HCT116 (cell line): ENCODE measurements at regions of chr16 and their contacts with region 1.

Region 1: DNA sequence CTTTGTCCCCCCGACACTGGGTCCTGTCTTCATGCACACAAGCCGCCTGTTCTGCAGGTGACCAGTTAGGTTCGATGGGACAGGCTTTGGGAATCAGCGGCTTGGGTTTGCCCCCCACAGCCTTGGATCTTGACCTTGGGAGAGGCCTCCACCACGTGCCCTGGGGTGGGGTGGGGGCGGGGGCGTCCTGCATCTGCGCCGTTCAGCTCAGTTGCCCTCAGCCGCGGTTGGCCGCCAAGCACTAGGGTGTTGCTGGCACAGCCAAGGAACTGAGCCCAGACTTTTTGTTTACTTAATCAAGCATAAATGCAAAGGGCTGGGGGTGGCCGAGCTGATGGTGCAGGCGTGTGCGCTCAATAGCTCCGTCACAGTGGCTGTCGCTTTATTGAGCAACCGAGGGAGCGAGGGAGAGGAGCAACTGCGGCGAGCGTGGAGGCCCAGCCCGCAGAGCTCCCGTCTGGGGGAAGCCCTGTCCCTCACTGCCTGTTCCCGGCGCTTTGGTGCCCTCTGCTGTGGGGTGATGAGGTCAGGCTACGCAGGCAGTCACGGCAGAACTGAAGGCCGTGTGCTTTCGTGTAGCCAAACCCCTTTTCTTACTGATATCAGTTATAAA is 33.9 kb downstream of the JPH3 start:
- DNase-seq: peak; percentile 76
- ATAC-seq: peak; percentile 90
- H3K4me3 ChIP-seq: peak overlapping the region; percentile 44 to 56
- H3K27ac ChIP-seq: peak overlapping the region; percentile 16; the same call in 1 of the 2 replicates
- H3K4me1 ChIP-seq: peaks cover 10 to 18% of the 10 kb centered on the region in 2 experiments
- H3K27me3 ChIP-seq: peaks cover 19% of the 10 kb centered on the region
- CTCF ChIP-seq: peak; percentile 73 to 94 (median 83)
- POLR2A ChIP-seq: no peak
- RAD21 ChIP-seq: peak; percentile 97

Region 2: DNA sequence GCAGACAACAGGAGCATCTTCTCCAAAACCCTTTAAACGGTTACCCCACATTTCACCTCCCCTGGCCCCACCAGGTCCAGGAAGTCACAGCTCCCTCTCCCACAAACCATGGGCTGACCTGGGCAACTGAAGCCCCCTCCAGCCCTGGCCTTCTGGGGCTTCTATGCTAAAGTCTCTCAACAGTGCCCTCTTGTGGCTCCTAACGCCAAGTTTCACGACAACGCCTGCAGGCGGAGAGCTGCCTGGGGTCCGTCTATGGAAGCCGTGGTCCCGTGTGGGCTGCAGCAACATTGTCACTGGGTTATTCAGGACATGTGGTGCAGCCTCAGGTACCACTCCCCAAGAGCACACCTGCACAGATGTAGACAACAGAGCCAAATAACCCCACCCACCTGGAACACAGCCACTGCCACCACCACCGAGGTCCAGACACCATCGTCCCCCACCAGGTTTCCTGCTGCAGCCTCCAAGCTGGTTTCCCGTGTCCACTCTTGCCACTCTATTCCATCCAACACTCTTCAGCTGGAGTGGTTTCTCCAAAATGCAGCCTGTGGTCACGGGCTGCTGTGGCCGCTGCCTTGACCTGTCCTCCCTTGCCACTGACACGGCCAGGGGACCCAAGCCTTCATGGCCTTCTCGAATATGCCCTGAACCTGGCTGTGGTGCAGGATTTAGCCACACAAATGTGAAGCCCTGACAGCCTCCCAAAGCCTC is 338.1 kb before region 1 on chr16:
- CTCF ChIA-PET with region 1: interaction called, 4 read pairs
- POLR2A ChIA-PET with region 1: no interaction called
- RAD21 ChIA-PET with region 1: no interaction called
- intact Hi-C with region 1: loop called (anchors 5 kb)
- DNase-seq: no peak
- ATAC-seq: peak; percentile 68
- H3K4me3 ChIP-seq: no peak overlapping the region
- H3K27ac ChIP-seq: no peak overlapping the region
- H3K4me1 ChIP-seq: peaks cover 4 to 10% of the 10 kb centered on the region in 2 experiments; a peak in 3 of 4 replicates
- H3K27me3 ChIP-seq: no peaks in the 10 kb centered on the region
- CTCF ChIP-seq: peak; percentile 60 to 89 (median 83)
- POLR2A ChIP-seq: no peak
- RAD21 ChIP-seq: peak; percentile 53

Region 3: DNA sequence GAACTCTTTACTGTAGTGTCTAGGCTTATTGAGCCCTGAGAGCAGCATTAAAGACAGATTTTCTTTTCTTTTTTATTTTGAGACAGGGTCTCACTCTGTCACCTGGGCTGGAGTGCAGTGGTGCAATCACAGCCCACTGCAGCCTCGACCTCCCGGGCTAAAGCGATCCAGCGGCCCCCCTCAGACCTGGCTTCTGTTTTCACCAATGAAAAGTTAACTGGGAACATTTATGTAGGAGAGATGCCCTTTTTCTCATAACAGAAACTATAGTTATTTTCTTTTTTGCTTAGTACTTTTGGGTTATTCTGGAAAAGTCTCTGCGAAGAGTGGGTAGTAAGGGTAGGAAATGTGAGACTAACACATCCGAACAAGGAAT is 242.5 kb before region 1 on chr16:
- CTCF ChIA-PET with region 1: interaction called, 18 read pairs
- POLR2A ChIA-PET with region 1: interaction called, 3 read pairs
- RAD21 ChIA-PET with region 1: interaction called, 6 read pairs
- intact Hi-C with region 1: no loop called
- DNase-seq: no peak
- ATAC-seq: no peak
- H3K4me3 ChIP-seq: peak overlapping the region; percentile 72; a peak in 3 of 4 replicates
- H3K27ac ChIP-seq: no peak overlapping the region
- H3K4me1 ChIP-seq: peaks cover 39 to 46% of the 10 kb centered on the region in 2 experiments
- H3K27me3 ChIP-seq: no peaks in the 10 kb centered on the region
- CTCF ChIP-seq: no peak
- POLR2A ChIP-seq: no peak
- RAD21 ChIP-seq: no peak

Region 4: DNA sequence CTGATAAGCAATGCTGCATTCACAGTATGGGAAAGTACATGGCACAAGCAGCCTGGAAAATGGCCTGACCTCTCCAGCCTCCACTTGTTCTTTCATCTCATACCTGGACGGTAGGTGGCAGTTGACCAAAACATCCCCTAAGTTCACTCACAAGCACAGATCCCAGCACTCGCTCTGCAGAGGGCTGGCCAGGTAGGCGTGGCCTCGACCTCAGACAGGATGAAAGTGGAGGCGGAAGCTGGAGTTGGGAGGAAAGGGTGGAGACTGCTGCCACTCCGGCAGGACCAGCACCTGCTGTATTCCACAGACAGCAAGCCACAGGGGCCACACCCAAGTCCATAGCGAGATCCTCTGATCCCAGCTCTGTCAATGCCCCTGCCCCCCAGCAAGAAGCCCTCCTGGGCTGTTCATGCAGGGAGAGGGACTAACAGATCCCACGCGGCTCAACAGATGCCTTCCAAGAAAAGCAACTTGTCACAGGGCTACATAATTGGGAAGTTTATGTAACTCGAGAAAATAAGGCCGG is 174.6 kb before region 1 on chr16:
- CTCF ChIA-PET with region 1: interaction called, 22 read pairs
- POLR2A ChIA-PET with region 1: no interaction called
- RAD21 ChIA-PET with region 1: interaction called, 3 to 4 read pairs
- intact Hi-C with region 1: loop called (anchors 2 kb)
- DNase-seq: peak; percentile 98
- ATAC-seq: peak; percentile 90
- H3K4me3 ChIP-seq: peak overlapping the region; percentile 35 to 44
- H3K27ac ChIP-seq: no peak overlapping the region
- H3K4me1 ChIP-seq: peaks cover 48 to 61% of the 10 kb centered on the region in 2 experiments
- H3K27me3 ChIP-seq: no peaks in the 10 kb centered on the region
- CTCF ChIP-seq: peak; percentile 73 to 82 (median 79); a peak in 5 of 6 replicates
- POLR2A ChIP-seq: no peak
- RAD21 ChIP-seq: peak; percentile 73

Region 5: DNA sequence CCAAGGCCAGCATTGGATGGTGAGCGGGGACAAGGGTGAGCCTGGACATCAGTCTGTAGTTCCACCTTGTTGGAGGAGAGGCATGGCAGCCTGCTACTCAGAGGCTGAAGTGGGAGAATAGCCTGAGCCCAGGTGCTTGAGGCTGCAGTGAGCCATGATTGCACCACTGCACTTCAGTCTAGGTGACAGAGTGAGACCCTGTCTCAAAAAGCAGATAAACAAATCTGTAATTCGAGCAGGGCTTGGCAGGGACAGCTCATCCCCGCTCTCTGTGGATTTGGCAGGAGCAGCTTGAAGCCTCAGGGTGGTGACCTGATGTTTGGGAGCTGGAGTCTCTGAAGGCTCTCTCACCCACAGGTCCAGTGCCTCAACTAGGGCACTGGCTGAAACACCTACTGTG is 104.8 kb before region 1 on chr16:
- CTCF ChIA-PET with region 1: no interaction called
- POLR2A ChIA-PET with region 1: no interaction called
- RAD21 ChIA-PET with region 1: no interaction called
- intact Hi-C with region 1: no loop called
- DNase-seq: no peak
- ATAC-seq: no peak
- H3K4me3 ChIP-seq: no peak overlapping the region
- H3K27ac ChIP-seq: no peak overlapping the region
- H3K4me1 ChIP-seq: peaks cover 0 to 4% of the 10 kb centered on the region in 2 experiments; a peak in 1 of 4 replicates
- H3K27me3 ChIP-seq: peaks cover 20% of the 10 kb centered on the region; the same call in 1 of the 2 replicates
- CTCF ChIP-seq: no peak
- POLR2A ChIP-seq: no peak
- RAD21 ChIP-seq: no peak

Region 6: DNA sequence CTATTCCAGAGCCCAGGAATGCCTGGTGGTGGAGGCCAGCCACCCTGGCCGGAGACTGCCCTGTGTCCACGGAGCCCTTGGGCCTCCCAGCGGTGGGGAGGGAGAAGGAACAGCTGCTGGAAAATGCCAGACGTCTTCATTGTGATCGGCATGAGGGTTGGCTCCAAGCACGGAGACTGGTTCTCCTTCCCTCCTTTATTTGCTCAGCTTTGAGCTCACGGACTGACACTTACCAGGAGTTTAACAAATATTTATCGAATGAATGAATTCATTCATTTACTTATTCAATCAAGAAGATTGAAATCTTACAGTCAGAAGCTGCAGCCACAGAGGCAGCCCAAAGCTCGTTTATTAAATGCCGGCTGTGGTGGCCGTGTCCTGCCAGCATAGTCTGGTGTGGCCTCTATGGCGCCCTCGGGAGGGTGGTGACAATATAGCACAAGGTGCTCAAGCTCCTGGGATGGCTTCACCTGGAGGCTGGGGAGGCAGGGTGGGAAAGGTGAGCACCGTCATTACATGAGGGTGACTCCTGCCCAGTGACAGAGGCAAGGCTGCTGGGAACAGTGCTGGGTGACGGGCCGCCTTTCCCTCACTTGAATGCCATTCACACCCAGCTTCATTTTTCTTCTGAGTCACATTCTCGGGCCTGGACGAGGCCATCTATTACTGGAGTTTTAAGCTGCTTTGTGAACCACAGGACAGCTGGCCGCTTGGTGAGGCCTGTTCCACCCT is 64.9 kb before region 1 on chr16:
- CTCF ChIA-PET with region 1: interaction called, 30 read pairs
- POLR2A ChIA-PET with region 1: interaction called, 4 read pairs
- RAD21 ChIA-PET with region 1: interaction called, 5 to 13 read pairs
- intact Hi-C with region 1: no loop called
- DNase-seq: peak; percentile 42
- ATAC-seq: peak; percentile 91
- H3K4me3 ChIP-seq: no peak overlapping the region
- H3K27ac ChIP-seq: no peak overlapping the region
- H3K4me1 ChIP-seq: peaks cover 4 to 8% of the 10 kb centered on the region in 2 experiments; a peak in 3 of 4 replicates
- H3K27me3 ChIP-seq: no peaks in the 10 kb centered on the region
- CTCF ChIP-seq: peak; percentile 74 to 84 (median 81)
- POLR2A ChIP-seq: no peak
- RAD21 ChIP-seq: peak; percentile 47; the same call in 1 of the 2 replicates

Region 7: GRCh38 chr16:87877938-87878507 is 241.8 kb after region 1 on chr16:
- CTCF ChIA-PET with region 1: no interaction called
- POLR2A ChIA-PET with region 1: no interaction called
- RAD21 ChIA-PET with region 1: no interaction called
- intact Hi-C with region 1: loop called (anchors 5 kb)
- DNase-seq: no peak
- ATAC-seq: peak; percentile 73
- H3K4me3 ChIP-seq: no peak overlapping the region
- H3K27ac ChIP-seq: no peak overlapping the region
- H3K4me1 ChIP-seq: peaks cover 0 to 8% of the 10 kb centered on the region in 2 experiments; a peak in 2 of 4 replicates
- H3K27me3 ChIP-seq: no peaks in the 10 kb centered on the region
- CTCF ChIP-seq: peak; percentile 38 to 50 (median 48); a peak in 5 of 6 replicates
- POLR2A ChIP-seq: no peak
- RAD21 ChIP-seq: peak; percentile 63